GM13977 (cell line): ENCODE measurements at regions of chr15 and their contacts with region 1.

Region 1: GRCh38 chr15:67199881-67200763 is 54.3 kb downstream of the AAGAB start:
- DNase-seq: no peak
- CTCF ChIP-seq: no peak

Region 2: DNA sequence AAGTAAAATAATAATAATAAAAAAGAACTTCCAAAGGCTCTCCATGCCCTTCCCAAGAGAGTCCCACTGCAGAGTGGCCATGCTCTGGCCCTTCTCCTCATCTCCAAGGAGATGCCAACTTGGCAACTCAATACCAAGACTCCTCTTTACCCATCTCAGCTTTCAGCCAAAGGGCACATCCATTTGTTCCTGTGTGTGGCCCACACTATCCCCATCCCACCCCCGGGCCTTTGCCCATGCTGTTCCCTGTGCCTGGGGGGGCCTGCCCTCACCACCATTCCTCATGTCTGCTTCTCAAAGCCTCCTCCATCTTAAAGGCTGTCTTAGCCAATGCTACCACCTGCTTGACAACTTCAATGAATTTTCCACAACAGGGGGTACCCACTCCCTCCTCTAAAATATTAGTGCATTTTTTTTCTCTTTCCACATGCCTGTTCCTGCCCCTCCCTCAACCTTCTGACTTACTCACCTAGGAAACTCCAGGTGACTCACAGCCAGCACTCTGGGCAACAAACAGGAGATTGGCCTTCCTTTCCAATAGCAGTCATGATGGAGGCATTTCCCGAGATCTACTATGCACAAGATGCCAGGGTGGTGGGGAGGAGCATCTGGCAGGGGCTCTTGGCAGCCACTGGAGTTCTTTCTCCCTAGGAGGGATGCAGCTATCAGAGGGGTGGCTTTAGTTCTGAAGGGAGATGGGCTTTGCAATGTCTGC is 244.1 kb before region 1 on chr15:
- in situ Hi-C with region 1: loop called (anchors 10 kb)
- DNase-seq: no peak
- CTCF ChIP-seq: no peak